ENCODE measurements at regions of chr20 and their contacts with region 1.

Region 1: DNA sequence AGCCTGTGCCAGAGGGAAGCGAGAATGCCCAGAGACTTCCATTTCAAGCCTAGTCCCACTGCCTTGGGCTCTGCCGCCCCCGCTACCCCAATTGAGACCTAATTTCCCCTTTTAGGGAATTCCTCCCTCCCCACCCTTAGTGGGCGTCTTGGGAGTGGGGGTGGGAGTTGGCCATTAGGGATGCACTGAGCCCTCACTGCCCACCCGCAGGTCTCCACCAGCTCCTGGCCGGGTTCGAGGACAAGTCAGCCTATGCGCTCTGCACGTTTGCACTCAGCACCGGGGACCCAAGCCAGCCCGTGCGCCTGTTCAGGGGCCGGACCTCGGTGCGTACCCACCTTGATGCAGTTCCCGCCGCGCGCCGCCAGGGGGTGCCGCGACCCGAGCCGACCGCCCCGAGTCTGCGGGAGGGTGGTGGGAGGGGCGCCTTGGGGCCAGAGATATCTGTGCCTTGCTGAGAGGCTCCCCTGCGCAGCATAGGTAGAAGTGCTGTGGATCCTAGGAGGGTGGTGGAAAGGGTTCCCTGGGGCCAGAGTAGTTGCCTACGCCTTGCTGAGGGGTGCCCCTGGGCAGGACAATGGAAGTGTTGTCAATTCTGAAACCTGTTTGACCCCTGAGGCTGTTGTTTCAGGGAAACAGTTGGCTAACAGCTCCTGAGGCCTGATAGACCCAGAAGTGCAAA is 9.2 kb downstream of the ITPA start:
- H3K4me3 ChIP-seq: no peak overlapping the region
- H3K27ac ChIP-seq: no peak overlapping the region; the same call in 1 of the 2 replicates
- H3K4me1 ChIP-seq: no peaks in the 10 kb centered on the region; the same call in 1 of the 2 replicates
- CTCF ChIP-seq: peak; percentile 93

Region 2: GRCh38 chr20:2865630-2866029 is 352.8 kb before region 1 on chr20:
- CTCF ChIA-PET with region 1: no interaction called
- POLR2A ChIA-PET with region 1: interaction called, 15 read pairs
- H3K4me3 ChIP-seq: no peak overlapping the region
- H3K27ac ChIP-seq: no peak overlapping the region
- H3K4me1 ChIP-seq: peaks cover 4% of the 10 kb centered on the region
- CTCF ChIP-seq: 0 out of 2 replicates have a peak, but pooled peaks have one; percentile 32

Region 3: GRCh38 chr20:3276680-3277015 is 58.2 kb after region 1 on chr20:
- CTCF ChIA-PET with region 1: interaction called, 54 read pairs
- POLR2A ChIA-PET with region 1: interaction called, 3 read pairs
- H3K4me3 ChIP-seq: no peak overlapping the region
- H3K27ac ChIP-seq: no peak overlapping the region
- H3K4me1 ChIP-seq: no peaks in the 10 kb centered on the region
- CTCF ChIP-seq: peak; percentile 44; the same call in 1 of the 2 replicates

Region 4: DNA sequence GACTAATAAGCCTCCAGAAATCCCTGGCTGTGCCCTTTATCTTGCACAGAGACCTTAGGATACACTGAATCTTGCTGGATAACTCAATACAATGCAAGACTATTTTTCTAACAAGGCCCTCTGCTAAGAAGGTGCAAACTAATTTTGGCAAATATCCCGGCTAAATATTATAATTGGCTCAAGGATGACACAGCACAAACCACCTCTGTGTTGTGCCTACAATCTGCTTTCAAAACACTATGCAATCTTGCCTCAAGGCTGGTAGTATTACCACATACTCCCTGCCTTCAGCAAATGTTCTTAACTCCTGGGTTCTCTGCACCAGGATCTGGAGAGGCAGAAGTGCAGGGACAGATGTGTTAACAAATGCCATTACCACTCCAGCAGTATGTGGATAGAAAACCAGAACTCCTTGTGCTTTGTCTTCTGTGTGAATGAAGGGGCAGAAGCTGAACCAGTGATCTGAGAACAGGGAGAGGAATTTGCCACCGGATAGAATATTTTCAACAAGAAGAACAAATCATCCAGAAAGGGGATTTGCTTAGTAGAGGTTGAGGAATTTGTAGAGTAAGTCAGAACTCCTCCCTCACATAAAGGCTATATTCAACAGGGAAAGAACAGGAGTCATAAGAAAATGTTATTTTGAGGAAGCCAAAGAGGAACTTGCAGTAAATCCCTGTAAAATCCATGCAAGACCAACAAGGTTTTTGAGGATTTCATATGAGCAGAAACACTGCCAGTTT is 94.7 kb after region 1 on chr20:
- CTCF ChIA-PET with region 1: interaction called, 54 read pairs
- POLR2A ChIA-PET with region 1: interaction called, 4 read pairs
- H3K4me3 ChIP-seq: no peak overlapping the region
- H3K27ac ChIP-seq: no peak overlapping the region
- H3K4me1 ChIP-seq: peaks cover 3% of the 10 kb centered on the region; the same call in 1 of the 2 replicates
- CTCF ChIP-seq: no peak

Region 5: GRCh38 chr20:3420211-3420707 is 201.8 kb after region 1 on chr20:
- CTCF ChIA-PET with region 1: no interaction called
- POLR2A ChIA-PET with region 1: no interaction called
- H3K4me3 ChIP-seq: no peak overlapping the region
- H3K27ac ChIP-seq: no peak overlapping the region
- H3K4me1 ChIP-seq: no peaks in the 10 kb centered on the region
- CTCF ChIP-seq: no peak